Keratinocyte (primary cell): ENCODE measurements at regions of chr4 and their contacts with region 1.

Region 1: DNA sequence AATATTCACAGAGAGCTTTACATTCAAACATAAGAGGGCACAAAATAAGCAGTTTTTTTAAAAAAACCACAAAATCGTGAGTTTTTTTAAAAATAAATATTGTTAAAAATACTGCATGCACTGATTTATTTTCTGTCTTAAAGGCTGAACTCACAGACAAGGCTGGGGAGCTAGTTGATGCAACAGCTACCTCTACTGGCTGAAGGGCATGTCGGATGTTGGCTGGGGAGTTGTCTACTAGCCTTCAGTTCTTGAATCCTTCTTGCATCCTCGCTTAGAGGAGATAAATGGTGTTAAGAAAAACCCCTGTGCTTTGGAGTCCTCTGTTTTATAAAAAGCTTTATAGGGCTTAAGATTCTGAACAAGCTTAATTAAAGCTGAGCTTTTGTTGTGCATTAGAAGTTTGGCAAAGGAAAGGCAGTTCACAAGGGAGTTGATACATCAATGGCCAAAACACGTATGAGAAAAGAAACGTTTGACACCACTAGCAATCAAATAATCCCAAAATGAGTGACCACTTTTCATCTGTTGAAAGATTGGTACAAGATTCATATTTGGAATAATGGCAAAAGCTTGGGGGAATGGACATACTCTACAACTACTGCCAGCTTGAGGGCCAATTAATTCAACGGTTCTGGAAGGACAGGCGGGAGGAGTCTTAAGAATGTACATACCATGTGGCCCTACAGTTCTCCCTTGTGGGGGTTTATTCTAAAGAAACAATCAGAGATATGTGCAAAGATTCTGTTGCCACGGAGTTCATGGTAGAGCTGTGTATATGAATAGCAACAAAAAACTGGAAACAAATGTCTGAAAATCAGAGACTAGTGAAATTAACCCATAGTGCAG is 94.7 kb downstream of the SEL1L3 start:
- DNase-seq: peak; percentile 13
- H3K4me3 ChIP-seq: no peak overlapping the region
- H3K27ac ChIP-seq: no peak overlapping the region
- H3K4me1 ChIP-seq: no peaks in the 10 kb centered on the region
- H3K27me3 ChIP-seq: no peaks in the 10 kb centered on the region
- CTCF ChIP-seq: peak; percentile 72 to 91 (median 80)

Region 2: DNA sequence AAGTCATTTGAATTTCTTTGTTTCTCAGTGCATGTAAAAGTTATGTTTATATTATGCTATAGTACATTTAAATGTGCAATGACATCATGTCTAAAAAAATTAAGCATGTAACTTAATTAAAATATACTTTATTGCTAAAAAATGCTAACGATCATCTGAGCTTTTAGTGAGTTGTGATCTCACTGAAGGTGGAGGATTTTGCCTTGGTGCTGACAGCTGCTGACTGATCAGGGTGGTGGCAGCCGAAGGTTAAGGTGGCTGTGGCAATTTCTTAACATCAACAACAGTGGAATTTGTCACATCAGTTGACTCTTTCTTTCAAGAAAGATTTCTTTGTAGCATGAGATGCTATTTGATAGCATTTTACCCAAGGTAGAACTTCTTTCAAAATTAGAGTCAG is 384.5 kb before region 1 on chr4:
- dilution Hi-C with region 1: no loop called
- DNase-seq: no peak
- H3K4me3 ChIP-seq: no peak overlapping the region
- H3K27ac ChIP-seq: no peak overlapping the region
- H3K4me1 ChIP-seq: peaks cover 7% of the 10 kb centered on the region
- H3K27me3 ChIP-seq: no peaks in the 10 kb centered on the region
- CTCF ChIP-seq: no peak

Region 3: GRCh38 chr4:25439918-25440477 is 328.1 kb before region 1 on chr4:
- dilution Hi-C with region 1: loop called (anchors 25 kb)
- DNase-seq: no peak
- H3K4me3 ChIP-seq: no peak overlapping the region
- H3K27ac ChIP-seq: no peak overlapping the region
- H3K4me1 ChIP-seq: no peaks in the 10 kb centered on the region
- H3K27me3 ChIP-seq: no peaks in the 10 kb centered on the region
- CTCF ChIP-seq: peak; percentile 80 to 94 (median 90)

Region 4: GRCh38 chr4:25694466-25694865 is 73.6 kb before region 1 on chr4:
- dilution Hi-C with region 1: no loop called
- DNase-seq: no peak
- H3K4me3 ChIP-seq: no peak overlapping the region
- H3K27ac ChIP-seq: no peak overlapping the region
- H3K4me1 ChIP-seq: no peaks in the 10 kb centered on the region
- H3K27me3 ChIP-seq: no peaks in the 10 kb centered on the region
- CTCF ChIP-seq: no peak

Region 5: GRCh38 chr4:26281881-26282280 is 513.8 kb after region 1 on chr4:
- dilution Hi-C with region 1: no loop called
- DNase-seq: no peak
- H3K4me3 ChIP-seq: no peak overlapping the region
- H3K27ac ChIP-seq: no peak overlapping the region
- H3K4me1 ChIP-seq: no peaks in the 10 kb centered on the region
- H3K27me3 ChIP-seq: no peaks in the 10 kb centered on the region
- CTCF ChIP-seq: no peak